ENCODE measurements at regions of chr16 and their contacts with region 1.

Region 1: GRCh38 chr16:30786936-30787612 is at the start of gene ZNF629:
- DNase-seq: peak in 9 of 10 donors; percentile 12 to 67 (median 28)
- ATAC-seq: peak; percentile 60 to 65
- H3K4me3 Mint-ChIP-seq: peak within 1 kb of the TSS; percentile 82 to 93 (median 87)
- H3K27ac Mint-ChIP-seq: peak within 1 kb of the TSS in 9 of 10 donors; percentile 6 to 86 (median 80)
- H3K4me1 Mint-ChIP-seq: peaks cover 12 to 31% (median 21%) of the 10 kb centered on the region in 4 donors
- H3K27me3 Mint-ChIP-seq: peaks cover 0 to 3% (median 0%) of the 10 kb centered on the region in 5 donors
- polyA plus RNA-seq, gene ZNF629: 0.17 to 2.5 (median 0.91) TPM

Region 2: GRCh38 chr16:30755955-30756780 is 30.9 kb before region 1 on chr16:
- POLR2A ChIA-PET with region 1: no interaction called
- DNase-seq: peak in 1 of 10 donors; percentile 57
- ATAC-seq: no peak
- H3K4me3 Mint-ChIP-seq: no peak overlapping the region
- H3K27ac Mint-ChIP-seq: peak overlapping the region in 1 of 10 donors; percentile 22
- H3K4me1 Mint-ChIP-seq: peaks cover 5 to 19% (median 13%) of the 10 kb centered on the region in 4 donors
- H3K27me3 Mint-ChIP-seq: no peaks in the 10 kb centered on the region

Region 3: DNA sequence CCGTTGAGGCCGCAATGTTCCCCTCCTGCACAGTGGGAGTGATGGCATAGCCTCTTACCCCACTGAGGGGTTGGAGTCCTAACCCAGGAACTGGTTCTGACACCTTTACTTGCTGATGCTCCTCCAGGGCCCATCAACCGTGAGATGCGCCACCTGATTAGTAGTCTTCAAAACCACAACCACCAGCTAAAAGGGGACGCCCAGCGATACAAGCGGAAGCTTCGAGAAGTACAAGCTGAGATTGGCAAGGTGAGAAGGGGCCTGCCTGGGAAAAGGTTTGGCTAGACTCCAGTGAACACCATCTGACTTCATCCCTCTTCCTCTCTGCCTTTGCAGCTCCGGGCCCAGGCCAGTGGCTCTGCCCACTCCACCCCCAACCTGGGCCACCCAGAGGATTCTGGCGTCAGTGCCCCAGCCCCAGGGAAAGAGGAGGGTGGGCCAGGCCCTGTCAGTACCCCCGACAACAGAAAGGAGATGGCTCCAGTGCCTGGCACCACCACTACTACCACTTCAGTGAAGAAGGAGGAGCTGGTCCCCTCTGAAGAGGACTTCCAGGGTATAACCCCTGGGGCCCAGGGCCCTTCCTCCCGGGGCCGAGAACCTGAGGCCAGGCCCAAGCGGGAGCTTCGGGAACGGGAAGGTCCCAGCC is 19.2 kb before region 1 on chr16:
- POLR2A ChIA-PET with region 1: no interaction called
- DNase-seq: peak in 1 of 10 donors; percentile 49
- ATAC-seq: no peak
- H3K4me3 Mint-ChIP-seq: peak overlapping the region in 1 of 10 donors; percentile 22
- H3K27ac Mint-ChIP-seq: peak overlapping the region in 2 of 10 donors; percentile 71 to 82
- H3K4me1 Mint-ChIP-seq: peaks cover 19 to 29% (median 27%) of the 10 kb centered on the region in 4 donors
- H3K27me3 Mint-ChIP-seq: no peaks in the 10 kb centered on the region

Region 4: GRCh38 chr16:30805370-30806169 is 18.5 kb after region 1 on chr16:
- POLR2A ChIA-PET with region 1: interaction called, 34 read pairs
- DNase-seq: peak; percentile 38 to 72 (median 56)
- ATAC-seq: peak; percentile 88 to 89
- H3K4me3 Mint-ChIP-seq: peak overlapping the region; percentile 78 to 98 (median 90)
- H3K27ac Mint-ChIP-seq: peak overlapping the region; percentile 79 to 94 (median 88)
- H3K4me1 Mint-ChIP-seq: peaks cover 12 to 30% (median 27%) of the 10 kb centered on the region in 4 donors
- H3K27me3 Mint-ChIP-seq: peaks cover 0 to 2% (median 0%) of the 10 kb centered on the region in 5 donors

Region 5: DNA sequence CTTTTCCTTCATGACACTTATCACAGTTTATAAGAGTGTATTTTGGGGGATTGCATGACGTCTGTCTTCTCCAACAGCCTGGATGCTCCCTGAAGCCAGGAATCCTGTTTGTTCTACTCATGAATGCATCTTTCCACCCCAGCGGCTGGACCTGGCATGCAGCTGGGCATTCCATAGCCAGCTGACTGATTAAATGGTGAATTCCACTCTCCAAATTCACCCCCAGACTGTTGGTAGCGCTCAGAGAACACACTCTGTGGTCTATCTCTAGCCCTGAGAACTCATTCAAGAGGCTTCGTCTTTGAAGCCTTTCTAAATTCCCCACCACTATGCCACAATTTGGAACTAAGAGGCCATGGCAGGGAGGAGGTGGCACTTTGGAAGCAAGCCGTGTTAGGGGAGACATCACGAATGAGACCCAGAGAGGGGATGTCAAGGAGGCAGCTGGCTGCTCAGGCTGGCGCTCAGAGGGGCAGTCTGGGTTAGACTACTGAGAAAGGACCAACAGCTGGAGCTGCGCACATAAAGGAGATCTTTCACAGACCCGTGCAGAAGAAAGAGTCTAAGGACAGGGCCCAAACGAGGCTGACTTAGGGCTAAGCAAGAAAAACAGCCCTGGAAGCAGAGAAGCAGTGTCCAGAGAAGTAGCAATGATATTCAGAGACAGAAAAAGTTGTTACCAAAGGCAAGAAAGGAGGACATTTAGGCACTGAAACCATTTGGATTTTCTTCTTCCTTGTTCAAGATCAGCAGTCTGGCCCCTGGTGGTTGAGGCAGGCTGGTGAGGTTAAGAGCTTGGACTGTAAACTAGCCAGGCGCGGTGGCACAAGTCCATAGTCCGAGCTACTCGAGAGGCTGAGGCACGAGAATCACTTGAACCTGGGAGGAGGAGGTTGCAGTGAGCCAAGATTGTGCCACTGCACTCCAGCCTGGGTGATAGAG is 42.3 kb after region 1 on chr16:
- POLR2A ChIA-PET with region 1: no interaction called
- DNase-seq: peak in 1 of 10 donors; percentile 36
- ATAC-seq: no peak
- H3K4me3 Mint-ChIP-seq: no peak overlapping the region
- H3K27ac Mint-ChIP-seq: no peak overlapping the region
- H3K4me1 Mint-ChIP-seq: peaks cover 0 to 4% (median 0%) of the 10 kb centered on the region in 4 donors
- H3K27me3 Mint-ChIP-seq: peaks cover 0 to 7% (median 3%) of the 10 kb centered on the region in 5 donors